AG04449 (cell line): ENCODE measurements at regions of chr6 and their contacts with region 1.

Region 1: GRCh38 chr6:42661540-42662153 is 60.8 kb downstream of the PRPH2 start:
- DNase-seq: peak; percentile 3
- H3K4me3 ChIP-seq: no peak overlapping the region
- CTCF ChIP-seq: peak; percentile 70

Region 2: DNA sequence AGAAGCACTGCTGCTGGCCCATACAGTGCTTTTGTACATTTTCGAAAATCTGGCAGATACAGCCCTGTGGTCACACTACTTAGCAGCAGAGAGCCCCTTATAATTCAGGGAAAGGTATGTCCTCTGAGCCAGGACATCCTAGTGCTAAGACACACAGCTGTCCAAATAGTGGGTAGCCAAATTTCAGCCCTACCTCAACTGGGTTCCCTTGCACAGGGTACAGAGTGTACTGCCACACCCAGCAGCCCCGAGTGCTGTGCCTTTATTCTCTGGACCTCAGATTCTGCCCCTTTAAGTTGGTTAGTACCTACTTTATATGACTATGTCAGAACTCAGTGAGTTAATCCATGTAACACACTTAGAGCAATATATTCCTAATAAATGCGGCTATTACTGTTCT is 13.1 kb after region 1 on chr6:
- CTCF ChIA-PET with region 1: interaction called, 68 read pairs
- POLR2A ChIA-PET with region 1: no interaction called
- DNase-seq: no peak
- H3K4me3 ChIP-seq: no peak overlapping the region
- CTCF ChIP-seq: no peak

Region 3: GRCh38 chr6:42714098-42714761 is 52.6 kb after region 1 on chr6:
- CTCF ChIA-PET with region 1: interaction called, 10 read pairs
- POLR2A ChIA-PET with region 1: no interaction called
- DNase-seq: no peak
- H3K4me3 ChIP-seq: no peak overlapping the region
- CTCF ChIP-seq: no peak

Region 4: DNA sequence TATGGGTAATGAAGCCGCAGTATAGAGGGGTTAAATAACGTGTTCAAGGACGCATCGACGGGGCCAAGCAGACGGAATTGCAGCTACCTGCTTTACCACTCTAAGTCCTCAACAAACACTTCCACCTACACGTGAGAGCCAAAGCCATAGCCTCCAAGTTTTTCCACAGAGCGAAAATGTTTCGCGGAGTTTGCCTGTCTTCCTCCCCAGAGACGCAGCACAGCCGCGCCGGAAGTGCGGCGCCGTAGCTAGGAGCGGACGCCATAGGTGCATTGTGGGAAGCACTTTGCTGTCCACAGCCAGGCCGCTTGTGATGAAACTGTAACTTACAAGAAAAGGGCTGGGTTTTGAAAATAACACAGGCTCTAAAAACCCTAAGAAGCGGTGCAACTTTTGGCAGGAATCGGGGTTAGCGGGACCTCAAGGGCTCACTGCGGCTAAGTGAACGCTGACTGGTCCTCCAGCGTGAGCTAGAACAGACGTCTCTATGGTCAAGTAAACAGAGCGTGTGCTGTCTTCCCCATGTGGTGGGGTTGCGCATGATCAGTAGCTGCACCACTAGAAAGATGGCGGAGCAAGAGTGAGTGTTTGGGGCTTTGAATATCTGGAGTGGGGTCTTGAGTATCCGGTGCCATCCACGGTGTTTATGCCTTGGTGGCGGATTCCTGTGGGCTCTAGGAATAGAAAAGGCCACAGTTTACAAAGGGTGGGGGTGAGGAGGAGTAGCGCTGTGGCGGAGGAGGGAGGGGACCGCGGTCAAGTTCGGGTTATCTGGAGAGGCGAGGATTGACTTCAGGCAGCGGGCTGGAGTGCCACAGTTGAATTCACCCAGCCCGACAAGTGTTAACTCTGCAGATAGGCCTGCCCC is 218.0 kb after region 1 on chr6 and contains the start of gene RPL7L1:
- CTCF ChIA-PET with region 1: interaction called, 139 read pairs
- POLR2A ChIA-PET with region 1: no interaction called
- DNase-seq: peak; percentile 38
- H3K4me3 ChIP-seq: peak within 1 kb of the TSS; percentile 83
- CTCF ChIP-seq: peak; percentile 1

Region 5: DNA sequence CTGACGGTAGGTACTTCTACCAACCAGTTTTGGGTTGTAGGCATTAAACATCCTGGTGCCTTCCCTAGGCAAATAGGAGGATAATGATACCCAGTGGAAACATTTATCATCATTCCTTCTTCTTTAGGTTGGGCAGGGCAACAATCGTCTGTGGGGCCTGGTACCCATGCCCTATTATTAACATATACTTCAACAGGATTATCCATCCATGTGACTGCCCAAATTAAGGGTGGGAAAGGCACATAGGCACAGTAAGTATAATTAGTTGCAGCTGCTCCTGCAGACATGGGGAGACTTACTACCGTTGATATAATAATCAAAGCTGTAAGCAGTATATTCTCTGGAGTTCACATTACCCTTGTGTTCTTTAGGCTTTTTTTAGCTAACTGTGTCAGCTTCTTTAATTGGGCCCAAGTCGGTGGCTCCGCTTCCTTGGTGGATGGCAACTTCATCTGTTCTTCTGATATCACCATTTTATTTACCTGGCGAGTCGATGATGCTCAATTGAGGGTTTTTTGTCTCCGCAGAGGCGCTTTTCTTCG is 234.6 kb after region 1 on chr6:
- CTCF ChIA-PET with region 1: interaction called, 48 read pairs
- POLR2A ChIA-PET with region 1: no interaction called
- DNase-seq: no peak
- H3K4me3 ChIP-seq: no peak overlapping the region
- CTCF ChIP-seq: no peak

Region 6: DNA sequence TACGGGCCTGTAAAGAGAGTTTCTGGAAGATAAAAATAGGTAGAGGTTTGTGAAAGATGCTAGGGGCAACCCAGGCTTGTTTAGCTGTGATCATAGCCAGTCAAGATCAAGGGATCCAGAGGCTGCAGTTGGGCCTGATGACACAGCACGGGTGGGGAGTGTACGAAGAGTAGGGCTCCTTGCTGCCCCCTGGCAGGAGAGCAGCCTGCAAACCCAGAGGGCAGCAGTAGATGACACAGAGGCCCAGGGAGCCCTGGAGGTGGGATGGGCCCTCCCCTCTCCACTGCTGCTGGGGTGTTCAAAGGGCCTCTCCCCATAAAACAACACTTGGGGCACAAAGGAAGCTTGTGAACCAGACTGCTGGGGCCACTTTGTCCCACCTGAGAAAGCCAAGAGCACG is 1155.5 kb after region 1 on chr6:
- CTCF ChIA-PET with region 1: no interaction called
- POLR2A ChIA-PET with region 1: no interaction called
- DNase-seq: no peak
- H3K4me3 ChIP-seq: no peak overlapping the region
- CTCF ChIP-seq: peak; percentile 40